ENCODE measurements at regions of chr10 and their contacts with region 1.

Region 1: GRCh38 chr10:97407211-97407951 is 6.2 kb upstream of the RRP12 start:
- DNase-seq: peak; percentile 39 to 73 (median 68)
- H3K4me3 ChIP-seq: peak overlapping the region; percentile 36
- H3K4me3 Mint-ChIP-seq: peak overlapping the region in 6 of 7 donors; percentile 31 to 74 (median 70)
- H3K27ac ChIP-seq: no peak overlapping the region
- H3K27ac Mint-ChIP-seq: peak overlapping the region in 7 of 8 donors; percentile 1 to 82 (median 59)
- H3K4me1 ChIP-seq: peaks cover 6% of the 10 kb centered on the region
- H3K4me1 Mint-ChIP-seq: peaks cover 6 to 10% (median 9%) of the 10 kb centered on the region in 3 donors
- H3K27me3 ChIP-seq: no peaks in the 10 kb centered on the region
- H3K27me3 Mint-ChIP-seq: no peaks in the 10 kb centered on the region

Region 2: DNA sequence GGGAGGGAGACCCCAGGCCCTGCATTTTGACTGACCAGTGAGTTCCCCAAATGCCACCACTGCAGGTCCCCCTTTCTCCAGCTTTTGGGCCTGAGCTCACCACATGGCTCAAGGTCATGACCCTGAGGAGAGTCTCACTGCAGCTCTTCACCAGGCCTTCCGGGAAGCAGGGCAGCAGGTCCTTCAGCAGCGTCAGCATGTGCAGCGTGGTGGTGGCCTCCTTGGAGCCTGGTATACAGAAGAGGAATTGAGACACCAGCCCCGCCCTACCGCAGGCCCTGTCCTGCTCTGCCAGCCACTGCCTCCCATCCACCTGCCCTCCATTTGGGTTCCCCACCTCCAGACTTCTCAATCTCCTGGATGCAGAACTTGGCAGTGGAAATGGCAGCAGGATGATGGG is 19.2 kb before region 1 on chr10:
- CTCF ChIA-PET with region 1: no interaction called
- POLR2A ChIA-PET with region 1: no interaction called
- DNase-seq: no peak
- H3K4me3 ChIP-seq: no peak overlapping the region
- H3K4me3 Mint-ChIP-seq: no peak overlapping the region
- H3K27ac ChIP-seq: no peak overlapping the region
- H3K27ac Mint-ChIP-seq: no peak overlapping the region
- H3K4me1 ChIP-seq: no peaks in the 10 kb centered on the region
- H3K4me1 Mint-ChIP-seq: no peaks in the 10 kb centered on the region
- H3K27me3 ChIP-seq: no peaks in the 10 kb centered on the region
- H3K27me3 Mint-ChIP-seq: peaks cover 0 to 2% of the 10 kb centered on the region in 2 donors

Region 3: DNA sequence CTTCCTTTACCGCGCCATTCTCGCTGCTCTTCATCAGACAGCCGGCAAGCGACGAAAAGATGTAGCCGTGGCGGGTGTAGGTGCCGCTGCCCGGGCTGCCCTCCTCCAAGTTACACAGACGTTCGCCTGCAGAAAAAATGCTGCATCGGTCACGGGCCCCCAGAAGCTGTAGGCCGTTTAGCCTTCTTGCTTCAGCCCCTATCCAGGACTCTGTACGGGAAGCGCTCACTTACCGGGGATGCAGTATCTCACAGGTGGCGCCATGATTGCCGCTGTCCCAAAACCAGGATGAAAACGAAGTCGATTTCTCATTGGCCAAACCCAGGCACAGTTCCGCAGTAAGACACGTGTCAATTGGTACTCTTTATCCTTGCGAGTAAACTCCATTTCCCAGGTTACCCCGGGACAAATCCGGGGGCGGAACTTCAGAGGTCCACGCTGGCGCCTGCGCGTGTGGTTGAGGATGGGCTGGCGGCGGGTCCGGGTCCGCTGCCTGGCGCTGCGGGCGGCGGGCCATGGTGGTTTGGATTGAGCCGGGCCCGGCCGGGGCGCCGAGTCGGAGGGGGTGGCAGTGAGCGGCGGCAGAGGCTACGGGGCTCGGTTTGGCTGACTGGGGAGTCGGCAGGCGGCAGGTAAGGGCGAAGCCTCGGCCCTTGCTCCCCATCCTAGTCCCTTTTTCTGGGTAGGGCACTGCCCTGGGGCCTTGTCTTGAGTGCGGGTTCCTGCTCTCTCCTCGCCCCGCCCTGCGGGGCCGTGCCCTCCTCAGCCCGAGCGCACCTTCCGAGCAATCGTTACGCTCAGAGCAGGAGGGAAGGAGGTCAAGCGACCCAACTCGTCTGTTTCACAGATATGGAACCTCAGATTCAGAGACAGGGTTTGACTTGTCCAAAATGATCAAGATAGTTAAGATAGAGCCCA is 38.6 kb after region 1 on chr10 and contains the starts of genes EXOSC1 and ZDHHC16:
- CTCF ChIA-PET with region 1: interaction called, 13 read pairs
- POLR2A ChIA-PET with region 1: no interaction called
- DNase-seq: peak; percentile 81 to 92 (median 88)
- H3K4me3 ChIP-seq: peak within 1 kb of the TSS; percentile 78
- H3K4me3 Mint-ChIP-seq: peak within 1 kb of the TSS; percentile 98 to 100 (median 99)
- H3K27ac ChIP-seq: peak within 1 kb of the TSS; percentile 67
- H3K27ac Mint-ChIP-seq: peak within 1 kb of the TSS; percentile 52 to 96 (median 90)
- H3K4me1 ChIP-seq: peaks cover 21% of the 10 kb centered on the region
- H3K4me1 Mint-ChIP-seq: peaks cover 45 to 59% (median 53%) of the 10 kb centered on the region in 3 donors
- H3K27me3 ChIP-seq: no peaks in the 10 kb centered on the region
- H3K27me3 Mint-ChIP-seq: no peaks in the 10 kb centered on the region
- total RNA-seq, gene EXOSC1: 61.0 to 64.8 TPM
- total RNA-seq, gene ZDHHC16: 56.2 to 57.6 TPM